Uterus (tissue), 4 donors: ENCODE measurements at regions of chr22 and their contacts with region 1.

Region 1: DNA sequence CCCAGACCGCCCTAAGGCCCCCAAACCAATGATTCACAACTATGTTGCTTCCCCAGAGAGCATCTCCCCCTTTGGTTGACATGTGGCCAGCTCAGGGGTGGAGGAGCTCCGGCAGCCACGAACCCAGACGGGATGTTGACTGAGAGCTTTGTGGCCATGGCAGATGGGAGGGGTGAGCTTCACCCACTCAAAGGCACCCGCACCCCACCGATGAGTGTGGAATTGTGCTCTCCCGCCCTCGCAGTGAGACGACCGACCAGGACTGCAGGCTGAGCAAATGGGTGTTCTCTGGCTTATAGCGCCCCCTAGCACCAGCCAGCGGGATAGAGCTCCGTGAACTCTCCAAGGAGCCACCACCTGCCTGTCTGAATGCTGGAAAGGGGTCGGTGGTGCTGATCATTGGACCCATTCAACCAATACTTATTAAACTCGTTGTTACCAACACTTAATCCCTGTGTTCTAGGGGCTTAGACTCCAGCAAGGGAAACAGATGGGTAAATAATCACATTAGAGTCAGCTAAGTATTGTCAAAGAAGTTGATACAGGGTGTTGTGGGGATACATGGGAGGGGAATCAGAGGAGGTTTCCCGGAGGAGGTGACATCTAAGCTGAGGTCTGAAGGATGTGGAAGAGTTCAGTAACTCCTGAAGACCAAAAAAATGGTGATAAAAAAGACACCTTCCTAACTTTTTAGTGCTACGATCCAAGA is 4.5 kb upstream of the TIMP3 start:
- DNase-seq: peak; percentile 76 to 81
- H3K4me3 ChIP-seq: no peak overlapping the region
- H3K27ac ChIP-seq: peak overlapping the region; percentile 39 to 49
- H3K4me1 ChIP-seq: no peaks in the 10 kb centered on the region
- H3K27me3 ChIP-seq: no peaks in the 10 kb centered on the region
- CTCF ChIP-seq: peak; percentile 76 to 93 (median 88)
- POLR2A ChIP-seq: no peak

Region 2: DNA sequence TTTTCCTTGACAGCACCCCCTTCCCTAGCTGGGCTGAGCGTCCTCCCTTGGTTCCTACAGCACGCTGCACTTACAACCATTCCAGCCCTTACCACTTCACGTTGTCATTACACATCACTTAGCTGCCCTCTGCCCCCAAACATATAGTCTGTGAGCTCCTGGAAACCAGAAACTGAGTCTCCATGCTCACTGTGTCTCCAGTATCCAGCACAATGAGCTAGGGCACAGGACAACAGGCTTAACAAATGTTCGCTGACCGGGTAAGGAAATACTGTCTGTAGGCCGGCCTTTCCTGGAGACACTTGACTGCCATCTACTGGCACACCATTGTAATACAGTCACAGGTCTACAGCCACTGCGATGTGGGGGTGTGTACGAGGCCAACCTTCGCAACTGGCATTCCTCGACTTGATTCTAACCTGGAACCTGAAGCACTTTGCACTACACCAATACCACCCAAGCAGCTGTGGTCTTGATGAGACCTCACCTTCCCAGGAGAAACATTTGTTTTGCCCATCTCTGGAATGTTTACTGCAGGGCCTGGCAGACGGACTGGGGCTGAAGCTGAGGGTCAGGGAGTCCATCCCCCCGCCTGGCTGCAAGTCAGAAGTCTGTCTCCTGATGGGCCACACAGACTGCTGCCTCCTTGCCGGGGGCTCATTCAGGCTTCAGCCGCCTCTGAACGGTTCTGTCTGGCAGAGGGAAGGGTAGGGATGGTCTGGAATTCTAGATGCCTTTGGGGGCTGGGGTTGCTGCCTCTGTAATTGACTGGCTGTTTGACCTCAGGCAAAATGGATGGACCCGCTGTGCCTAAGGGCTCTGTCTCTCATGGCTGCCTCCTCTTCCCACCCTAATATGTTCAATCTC is 189.1 kb after region 1 on chr22:
- intact Hi-C with region 1: loop called (anchors 10 kb)
- DNase-seq: peak; percentile 76 to 85
- H3K4me3 ChIP-seq: no peak overlapping the region
- H3K27ac ChIP-seq: no peak overlapping the region
- H3K4me1 ChIP-seq: no peaks in the 10 kb centered on the region
- H3K27me3 ChIP-seq: no peaks in the 10 kb centered on the region
- CTCF ChIP-seq: peak; percentile 84 to 96 (median 92)
- POLR2A ChIP-seq: no peak